H1 (cell line): ENCODE measurements at regions of chr2 and their contacts with region 1.

Region 1: DNA sequence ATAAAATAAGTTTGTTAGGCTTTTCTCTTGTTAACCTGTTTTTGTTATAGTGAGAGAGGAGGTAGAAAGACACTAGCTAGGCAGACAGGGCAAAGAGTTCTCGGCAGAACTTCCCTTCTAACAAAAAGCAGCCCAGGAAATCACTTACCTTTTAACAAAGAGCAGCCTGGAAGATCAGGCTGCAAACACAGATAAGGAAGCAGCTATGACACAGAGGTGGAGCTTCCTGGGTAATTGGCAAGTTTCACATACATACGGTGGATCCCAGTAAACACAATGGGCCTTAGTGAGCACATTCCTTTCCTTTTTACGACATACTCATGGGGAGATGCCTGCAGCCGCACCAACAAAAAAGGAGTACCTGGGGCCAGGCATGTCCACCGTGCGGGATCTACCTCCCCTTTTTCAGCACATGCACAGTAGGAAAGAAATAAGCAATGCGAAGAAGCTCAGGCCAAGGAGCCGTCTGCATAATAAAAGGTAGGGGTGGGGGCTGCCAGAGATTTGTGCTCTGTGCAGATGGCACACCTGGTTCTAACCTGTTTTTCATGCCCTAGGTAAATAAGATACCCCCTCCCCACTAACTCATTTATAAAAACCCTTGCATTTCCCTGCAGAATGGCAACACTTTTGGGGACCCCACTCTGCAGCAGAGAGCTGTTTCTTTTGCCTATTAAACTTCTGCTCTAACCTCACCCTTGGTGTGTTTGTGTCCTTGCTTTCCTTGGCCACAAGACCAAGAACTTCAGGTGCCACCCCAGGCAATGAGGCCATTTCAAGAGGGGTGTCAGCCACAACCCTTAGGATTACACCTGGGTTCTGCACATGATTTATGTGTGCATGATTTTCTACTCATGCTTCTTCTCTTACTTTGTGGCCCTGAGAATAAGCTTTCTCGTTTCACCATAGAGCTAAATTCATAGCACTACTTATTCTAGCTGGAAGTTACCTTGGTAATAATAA is 26.5 kb downstream of the MDH1 start:
- DNase-seq: peak; percentile 57 to 70
- H3K4me3 ChIP-seq: peak overlapping the region; percentile 24 to 58 (median 33); a peak in 7 of 8 replicates
- H3K27ac ChIP-seq: peak overlapping the region; percentile 95
- H3K4me1 ChIP-seq: peaks cover 9 to 40% (median 21%) of the 10 kb centered on the region in 4 experiments
- H3K27me3 ChIP-seq: no peaks in the 10 kb centered on the region
- CTCF ChIP-seq: no peak
- EP300 ChIP-seq: peak in 1 of 2 experiments; percentile 81; a peak in 1 of 3 replicates
- POLR2A ChIP-seq: peak; percentile 13 to 81
- RAD21 ChIP-seq: no peak; a peak in 1 of 4 replicates

Region 2: DNA sequence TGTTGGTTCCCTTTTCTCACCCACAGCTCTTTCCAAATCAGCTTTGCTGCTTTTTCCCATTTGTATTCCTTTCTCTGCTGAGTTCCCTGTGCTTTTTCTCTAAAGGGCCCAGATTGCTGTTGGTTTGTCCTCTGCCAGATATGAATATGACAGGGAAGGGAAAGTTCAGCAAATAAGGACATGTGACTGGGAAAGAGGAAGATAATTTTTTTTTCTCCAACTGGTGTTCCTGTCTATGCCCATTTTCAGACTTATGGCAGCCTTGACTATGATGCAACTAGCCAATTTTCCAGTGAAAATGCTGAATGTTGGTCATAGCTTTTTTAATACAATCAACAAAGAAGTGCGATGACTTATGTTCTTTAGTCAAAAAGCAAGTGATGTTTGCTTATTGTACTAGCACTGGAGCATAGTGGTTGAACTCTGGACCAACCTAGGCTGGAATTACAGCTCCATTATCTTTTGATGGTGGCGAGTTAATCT is 18.8 kb before region 1 on chr2:
- CTCF ChIA-PET with region 1: no interaction called
- POLR2A ChIA-PET with region 1: interaction called, 13 read pairs
- DNase-seq: no peak
- H3K4me3 ChIP-seq: no peak overlapping the region
- H3K27ac ChIP-seq: no peak overlapping the region
- H3K4me1 ChIP-seq: peaks cover 2 to 6% (median 3%) of the 10 kb centered on the region in 4 experiments; a peak in 4 of 7 replicates
- H3K27me3 ChIP-seq: no peaks in the 10 kb centered on the region
- CTCF ChIP-seq: no peak
- EP300 ChIP-seq: no peak
- POLR2A ChIP-seq: no peak
- RAD21 ChIP-seq: no peak

Region 3: DNA sequence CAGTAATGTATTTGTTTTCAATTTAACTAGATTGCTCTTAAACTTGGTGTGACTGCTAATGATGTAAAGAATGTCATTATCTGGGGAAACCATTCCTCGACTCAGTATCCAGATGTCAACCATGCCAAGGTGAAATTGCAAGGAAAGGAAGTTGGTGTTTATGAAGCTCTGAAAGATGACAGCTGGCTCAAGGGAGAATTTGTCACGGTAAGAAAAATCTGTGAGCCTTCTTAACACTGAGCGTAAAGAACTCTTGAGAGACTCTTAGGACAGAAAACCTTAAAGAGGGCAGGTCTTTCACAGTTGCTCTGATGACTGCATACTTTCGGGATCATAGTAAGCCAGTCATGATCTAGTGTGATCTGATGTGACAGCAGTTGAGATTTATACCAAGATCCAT is 10.6 kb before region 1 on chr2:
- CTCF ChIA-PET with region 1: interaction called, 4 read pairs
- POLR2A ChIA-PET with region 1: interaction called, 19 read pairs
- DNase-seq: no peak
- H3K4me3 ChIP-seq: no peak overlapping the region
- H3K27ac ChIP-seq: no peak overlapping the region
- H3K4me1 ChIP-seq: peaks cover 0 to 3% (median 0%) of the 10 kb centered on the region in 4 experiments; a peak in 1 of 7 replicates
- H3K27me3 ChIP-seq: no peaks in the 10 kb centered on the region
- CTCF ChIP-seq: no peak
- EP300 ChIP-seq: no peak
- POLR2A ChIP-seq: peak in 1 of 2 experiments; percentile 13; a peak in 1 of 3 replicates
- RAD21 ChIP-seq: no peak

Region 4: DNA sequence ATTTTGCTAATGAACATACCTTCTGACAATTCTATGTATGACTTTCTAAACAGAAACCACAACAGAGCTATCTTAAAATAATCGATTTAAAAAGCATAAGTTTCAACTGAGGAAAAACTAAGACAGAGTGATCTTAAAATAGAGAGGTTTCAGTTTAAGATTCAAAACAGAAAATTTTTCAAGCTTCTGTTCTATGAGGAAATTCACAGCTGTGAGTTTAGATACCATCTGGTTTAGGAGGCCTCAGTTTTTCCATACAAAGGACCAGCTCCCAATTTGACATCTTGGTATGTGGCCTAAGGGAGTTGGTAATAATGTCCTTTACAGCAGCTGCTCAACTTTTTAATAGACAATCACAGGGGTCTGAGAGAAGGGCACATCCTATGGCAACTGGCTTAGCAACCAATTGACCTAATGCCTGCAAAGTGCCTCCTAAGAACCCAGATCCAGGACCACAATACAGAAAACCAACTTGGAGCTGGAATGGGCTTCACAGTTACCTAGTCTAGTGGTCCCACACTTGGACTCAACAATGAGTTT is 13.2 kb after region 1 on chr2:
- CTCF ChIA-PET with region 1: interaction called, 3 read pairs
- POLR2A ChIA-PET with region 1: interaction called, 14 read pairs
- DNase-seq: no peak
- H3K4me3 ChIP-seq: no peak overlapping the region
- H3K27ac ChIP-seq: no peak overlapping the region
- H3K4me1 ChIP-seq: no peaks in the 10 kb centered on the region
- H3K27me3 ChIP-seq: no peaks in the 10 kb centered on the region
- CTCF ChIP-seq: no peak
- EP300 ChIP-seq: no peak
- POLR2A ChIP-seq: no peak
- RAD21 ChIP-seq: no peak

Region 5: GRCh38 chr2:63651861-63652651 is 36.8 kb after region 1 on chr2:
- CTCF ChIA-PET with region 1: no interaction called
- POLR2A ChIA-PET with region 1: no interaction called
- DNase-seq: no peak
- H3K4me3 ChIP-seq: no peak overlapping the region
- H3K27ac ChIP-seq: no peak overlapping the region
- H3K4me1 ChIP-seq: no peaks in the 10 kb centered on the region
- H3K27me3 ChIP-seq: no peaks in the 10 kb centered on the region
- CTCF ChIP-seq: no peak
- EP300 ChIP-seq: no peak
- POLR2A ChIP-seq: no peak
- RAD21 ChIP-seq: no peak

Region 6: GRCh38 chr2:63701406-63701805 is 86.1 kb after region 1 on chr2:
- CTCF ChIA-PET with region 1: no interaction called
- POLR2A ChIA-PET with region 1: no interaction called
- DNase-seq: no peak
- H3K4me3 ChIP-seq: no peak overlapping the region
- H3K27ac ChIP-seq: no peak overlapping the region
- H3K4me1 ChIP-seq: peaks cover 0 to 6% (median 2%) of the 10 kb centered on the region in 4 experiments; a peak in 3 of 7 replicates
- H3K27me3 ChIP-seq: no peaks in the 10 kb centered on the region
- CTCF ChIP-seq: no peak
- EP300 ChIP-seq: no peak
- POLR2A ChIP-seq: no peak
- RAD21 ChIP-seq: no peak

Region 7: DNA sequence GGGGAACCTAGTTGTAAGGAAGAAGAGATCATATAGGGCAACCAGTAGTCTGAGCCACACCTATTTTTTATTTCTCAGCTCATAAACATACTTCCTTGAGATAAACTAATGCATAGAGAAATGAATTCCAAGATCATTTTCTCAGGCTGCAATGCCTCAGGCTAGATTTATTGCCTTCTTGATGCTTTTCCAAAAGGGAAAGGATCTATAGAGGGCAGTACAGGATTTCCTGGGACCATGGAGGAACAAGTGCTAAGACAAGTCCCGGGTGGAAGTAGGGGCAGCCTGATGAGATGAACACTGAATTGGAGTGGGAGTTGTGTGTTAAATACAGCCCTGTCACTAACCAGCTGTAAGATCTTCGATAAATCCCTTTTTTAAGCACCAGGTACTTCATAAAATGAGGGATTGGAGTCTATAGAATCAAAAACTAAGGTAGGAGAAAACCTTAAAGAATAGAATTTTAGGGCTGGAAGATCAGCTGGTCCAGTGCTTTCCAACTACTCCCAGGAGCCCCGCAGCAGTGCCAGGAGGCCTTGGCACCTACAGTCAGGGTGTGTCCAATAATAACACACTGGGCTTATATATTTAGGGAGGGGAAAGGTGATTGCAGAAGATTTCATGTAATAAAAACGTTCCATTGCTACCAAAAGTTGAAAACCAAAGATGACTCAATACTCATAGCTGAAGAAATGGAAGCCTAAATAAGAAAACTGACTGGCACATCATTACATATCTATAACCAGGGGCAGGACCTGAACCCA is 980.3 kb after region 1 on chr2:
- CTCF ChIA-PET with region 1: no interaction called
- POLR2A ChIA-PET with region 1: no interaction called
- DNase-seq: no peak
- H3K4me3 ChIP-seq: no peak overlapping the region
- H3K27ac ChIP-seq: no peak overlapping the region
- H3K4me1 ChIP-seq: no peaks in the 10 kb centered on the region
- H3K27me3 ChIP-seq: no peaks in the 10 kb centered on the region
- CTCF ChIP-seq: peak in 2 of 3 experiments; percentile 64 to 68; a peak in 3 of 4 replicates
- EP300 ChIP-seq: no peak
- POLR2A ChIP-seq: no peak
- RAD21 ChIP-seq: peak; percentile 73 to 84